HepG2 (cell line): ENCODE measurements at regions of chr12 and their contacts with region 1.

Region 1: GRCh38 chr12:68291396-68292036 is 38.1 kb upstream of the IL22 start:
- DNase-seq: no peak
- ATAC-seq: no peak
- H3K4me3 ChIP-seq: no peak overlapping the region
- H3K27ac ChIP-seq: no peak overlapping the region
- H3K4me1 ChIP-seq: no peaks in the 10 kb centered on the region
- H3K27me3 ChIP-seq: no peaks in the 10 kb centered on the region
- CTCF ChIP-seq: no peak
- EP300 ChIP-seq: no peak
- POLR2A ChIP-seq: no peak
- RAD21 ChIP-seq: no peak

Region 2: GRCh38 chr12:68250454-68250853 is 41.1 kb before region 1 on chr12:
- CTCF ChIA-PET with region 1: no interaction called
- POLR2A ChIA-PET with region 1: no interaction called
- in situ Hi-C with region 1: no loop called
- intact Hi-C with region 1: loop called (anchors 1 kb)
- DNase-seq: no peak
- ATAC-seq: no peak
- H3K4me3 ChIP-seq: no peak overlapping the region
- H3K27ac ChIP-seq: no peak overlapping the region
- H3K4me1 ChIP-seq: no peaks in the 10 kb centered on the region
- H3K27me3 ChIP-seq: peaks cover 0 to 13% of the 10 kb centered on the region in 2 experiments; a peak in 1 of 5 replicates
- CTCF ChIP-seq: no peak
- EP300 ChIP-seq: no peak
- POLR2A ChIP-seq: no peak
- RAD21 ChIP-seq: no peak

Region 3: DNA sequence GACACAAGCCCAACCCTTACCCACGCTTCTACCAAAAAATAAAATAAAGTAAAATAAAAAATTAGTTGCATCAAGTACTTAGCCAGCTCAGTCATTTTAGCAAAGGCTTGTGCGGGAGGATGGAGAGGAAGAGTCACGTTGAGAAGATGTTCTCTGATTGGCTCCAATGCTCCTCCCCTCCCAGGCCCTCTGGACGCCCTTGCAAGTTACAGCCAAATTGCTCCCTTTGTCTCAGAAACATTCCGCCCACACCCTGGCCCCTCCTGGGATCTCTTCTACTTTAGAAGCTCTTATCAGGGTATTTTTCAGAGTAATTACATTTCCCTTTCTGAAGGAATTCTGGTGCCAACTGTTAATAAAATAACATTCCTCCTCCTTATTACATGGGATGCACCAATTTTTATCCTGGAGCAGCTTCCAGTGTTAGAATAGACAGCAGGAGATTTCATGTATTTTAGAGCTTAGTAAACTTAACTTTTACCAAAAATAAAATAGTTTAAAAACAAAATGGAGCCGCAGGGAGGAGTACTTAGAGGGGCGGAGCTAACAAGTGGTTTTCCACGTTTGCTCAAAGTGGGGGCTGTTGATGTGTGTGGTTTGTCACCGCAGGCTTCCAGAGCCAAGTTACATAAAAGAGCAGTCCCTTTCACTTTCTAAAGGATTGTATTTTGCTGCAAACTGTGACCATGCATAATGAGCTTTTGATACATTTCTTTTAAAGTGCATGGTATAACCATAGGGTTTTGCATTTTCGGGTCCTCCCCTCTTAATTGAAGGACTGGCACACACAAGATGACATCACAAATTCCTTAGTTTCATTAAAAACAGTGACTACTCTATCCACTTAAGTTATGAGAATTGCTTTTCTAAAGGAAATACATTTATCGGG is 247.5 kb after region 1 on chr12:
- CTCF ChIA-PET with region 1: no interaction called
- POLR2A ChIA-PET with region 1: no interaction called
- in situ Hi-C with region 1: no loop called
- intact Hi-C with region 1: no loop called
- DNase-seq: no peak
- ATAC-seq: no peak
- H3K4me3 ChIP-seq: no peak overlapping the region
- H3K27ac ChIP-seq: no peak overlapping the region
- H3K4me1 ChIP-seq: no peaks in the 10 kb centered on the region
- H3K27me3 ChIP-seq: no peaks in the 10 kb centered on the region; a peak in 1 of 5 replicates
- CTCF ChIP-seq: no peak
- EP300 ChIP-seq: no peak
- POLR2A ChIP-seq: no peak
- RAD21 ChIP-seq: no peak